ENCODE measurements at regions of chr15 and their contacts with region 1.

Region 1: GRCh38 chr15:25596644-25597562 is 158.1 kb upstream of the UBE3A start:
- DNase-seq: no peak
- ATAC-seq: peak; percentile 71 to 82 (median 77)
- H3K4me3 ChIP-seq: peak overlapping the region; percentile 43
- H3K27ac ChIP-seq: peak overlapping the region; percentile 28
- H3K4me1 ChIP-seq: no peaks in the 10 kb centered on the region
- H3K27me3 ChIP-seq: no peaks in the 10 kb centered on the region
- CTCF ChIP-seq: no peak

Region 2: DNA sequence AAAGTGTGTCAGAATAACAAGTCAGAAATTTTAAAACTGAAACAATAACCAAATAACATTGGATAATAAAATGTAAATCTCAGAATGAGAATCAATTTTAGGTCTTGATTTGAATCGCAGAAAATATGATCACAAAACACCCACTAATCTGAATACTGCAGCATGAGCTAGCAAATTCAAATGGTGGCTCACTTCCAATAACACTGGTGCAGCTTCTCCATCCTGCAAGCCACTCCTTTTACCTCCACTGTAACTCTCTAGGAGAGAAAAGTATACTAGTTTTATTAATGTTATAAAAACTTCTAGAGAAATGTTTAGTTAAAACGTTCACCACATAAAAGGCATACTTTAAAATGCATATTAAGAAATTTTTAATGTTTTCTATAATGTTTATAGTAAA is 188.5 kb before region 1 on chr15:
- intact Hi-C with region 1: no loop called
- DNase-seq: no peak
- ATAC-seq: peak; percentile 57 to 79 (median 64)
- H3K4me3 ChIP-seq: no peak overlapping the region
- H3K27ac ChIP-seq: peak overlapping the region; percentile 36
- H3K4me1 ChIP-seq: peaks cover 40% of the 10 kb centered on the region
- H3K27me3 ChIP-seq: no peaks in the 10 kb centered on the region
- CTCF ChIP-seq: no peak

Region 3: DNA sequence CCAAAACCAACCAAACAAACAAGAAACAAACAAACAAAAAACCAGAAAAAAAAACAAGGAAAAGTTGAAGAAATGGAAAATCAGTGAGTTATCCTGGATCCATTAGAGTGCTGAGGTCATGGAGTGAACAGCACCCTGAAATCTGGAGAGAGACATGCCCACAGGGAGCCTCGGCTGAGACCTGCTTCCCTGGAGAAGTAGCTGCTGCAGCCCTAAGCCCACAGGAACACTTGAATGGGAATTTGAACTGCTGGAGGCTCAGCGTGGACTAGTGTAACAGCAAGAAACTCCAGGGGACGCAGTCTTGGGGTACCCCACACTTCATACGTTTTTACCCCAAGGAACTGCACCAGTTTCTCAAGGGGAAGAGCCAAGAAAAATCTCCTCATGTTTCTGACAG is 14.0 kb before region 1 on chr15:
- intact Hi-C with region 1: no loop called
- DNase-seq: no peak
- ATAC-seq: no peak
- H3K4me3 ChIP-seq: no peak overlapping the region
- H3K27ac ChIP-seq: no peak overlapping the region
- H3K4me1 ChIP-seq: no peaks in the 10 kb centered on the region
- H3K27me3 ChIP-seq: no peaks in the 10 kb centered on the region
- CTCF ChIP-seq: no peak

Region 4: DNA sequence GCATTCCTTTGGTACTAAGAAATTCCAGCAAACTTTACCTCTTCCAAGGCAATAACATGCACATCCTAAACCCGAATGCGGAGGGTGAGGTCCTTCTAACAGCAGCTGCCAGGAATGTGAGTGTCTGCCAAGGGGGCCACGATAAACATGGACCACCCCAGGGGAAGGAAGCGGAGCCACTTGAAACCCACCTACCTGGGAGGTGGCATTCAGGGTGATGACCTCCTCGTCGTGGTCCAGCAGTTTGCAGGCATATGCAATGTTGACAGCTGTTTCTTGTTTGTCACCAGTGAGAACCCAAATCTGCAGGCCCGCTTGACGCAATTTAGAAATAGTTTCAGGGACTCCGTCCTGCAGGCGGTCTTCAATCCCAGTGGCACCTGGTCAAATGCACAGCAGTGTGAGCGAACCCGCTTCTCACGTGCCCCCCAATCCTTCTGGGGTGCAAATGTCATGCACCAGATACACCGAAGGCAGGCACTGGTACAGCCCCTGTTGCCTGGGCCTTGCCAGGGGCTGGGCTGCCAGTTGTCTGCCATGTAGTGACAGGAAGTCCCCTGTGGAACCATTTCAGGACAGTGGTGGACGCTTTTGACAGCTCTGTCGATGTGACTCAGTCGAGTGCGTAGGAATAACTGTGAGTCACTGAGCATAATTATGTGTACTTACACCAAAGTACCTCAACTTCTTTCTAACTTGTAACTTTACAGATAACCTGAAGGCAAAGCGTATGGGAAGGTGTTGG is 105.0 kb after region 1 on chr15:
- intact Hi-C with region 1: loop called in 1 of 2 experiments (anchors 10 kb)
- DNase-seq: no peak
- ATAC-seq: no peak
- H3K4me3 ChIP-seq: no peak overlapping the region
- H3K27ac ChIP-seq: no peak overlapping the region
- H3K4me1 ChIP-seq: no peaks in the 10 kb centered on the region
- H3K27me3 ChIP-seq: no peaks in the 10 kb centered on the region
- CTCF ChIP-seq: no peak